PC-3 (cell line): ENCODE measurements at regions of chr10 and their contacts with region 1.

Region 1: GRCh38 chr10:72712136-72712535 is 20.2 kb downstream of the MCU start:
- DNase-seq: no peak
- ATAC-seq: no peak
- H3K4me3 ChIP-seq: no peak overlapping the region
- H3K27ac ChIP-seq: no peak overlapping the region
- H3K4me1 ChIP-seq: no peaks in the 10 kb centered on the region
- H3K27me3 ChIP-seq: no peaks in the 10 kb centered on the region
- CTCF ChIP-seq: no peak

Region 2: DNA sequence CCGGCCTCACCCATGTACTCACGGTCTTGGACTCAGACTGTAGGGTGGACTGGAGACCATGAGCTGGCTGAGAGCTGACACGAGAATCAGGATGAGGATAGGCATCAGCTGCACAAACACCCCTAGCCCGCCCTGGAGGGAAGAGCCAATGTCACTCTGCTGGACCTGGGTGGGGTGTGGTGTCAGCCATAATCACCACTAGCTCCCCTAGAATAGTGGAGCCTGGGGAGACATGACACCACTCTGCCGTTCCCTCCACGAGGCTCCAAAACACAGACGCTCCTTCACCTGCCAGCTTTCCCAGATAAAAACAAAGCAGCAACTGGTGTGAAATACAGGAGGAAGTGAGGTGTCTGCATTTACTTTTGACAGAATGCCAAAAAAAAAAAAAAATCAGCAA is 374.0 kb before region 1 on chr10:
- CTCF ChIA-PET with region 1: no interaction called
- POLR2A ChIA-PET with region 1: interaction called, 12 read pairs
- intact Hi-C with region 1: no loop called
- DNase-seq: no peak
- ATAC-seq: no peak
- H3K4me3 ChIP-seq: no peak overlapping the region
- H3K27ac ChIP-seq: no peak overlapping the region
- H3K4me1 ChIP-seq: no peaks in the 10 kb centered on the region
- H3K27me3 ChIP-seq: no peaks in the 10 kb centered on the region
- CTCF ChIP-seq: no peak

Region 3: GRCh38 chr10:72480861-72481260 is 231.3 kb before region 1 on chr10:
- CTCF ChIA-PET with region 1: no interaction called
- POLR2A ChIA-PET with region 1: no interaction called
- intact Hi-C with region 1: no loop called
- DNase-seq: no peak
- ATAC-seq: no peak
- H3K4me3 ChIP-seq: no peak overlapping the region
- H3K27ac ChIP-seq: no peak overlapping the region
- H3K4me1 ChIP-seq: no peaks in the 10 kb centered on the region
- H3K27me3 ChIP-seq: no peaks in the 10 kb centered on the region
- CTCF ChIP-seq: no peak